Motor neuron (in vitro differentiated cells): ENCODE measurements at regions of chr5 and their contacts with region 1.

Region 1: DNA sequence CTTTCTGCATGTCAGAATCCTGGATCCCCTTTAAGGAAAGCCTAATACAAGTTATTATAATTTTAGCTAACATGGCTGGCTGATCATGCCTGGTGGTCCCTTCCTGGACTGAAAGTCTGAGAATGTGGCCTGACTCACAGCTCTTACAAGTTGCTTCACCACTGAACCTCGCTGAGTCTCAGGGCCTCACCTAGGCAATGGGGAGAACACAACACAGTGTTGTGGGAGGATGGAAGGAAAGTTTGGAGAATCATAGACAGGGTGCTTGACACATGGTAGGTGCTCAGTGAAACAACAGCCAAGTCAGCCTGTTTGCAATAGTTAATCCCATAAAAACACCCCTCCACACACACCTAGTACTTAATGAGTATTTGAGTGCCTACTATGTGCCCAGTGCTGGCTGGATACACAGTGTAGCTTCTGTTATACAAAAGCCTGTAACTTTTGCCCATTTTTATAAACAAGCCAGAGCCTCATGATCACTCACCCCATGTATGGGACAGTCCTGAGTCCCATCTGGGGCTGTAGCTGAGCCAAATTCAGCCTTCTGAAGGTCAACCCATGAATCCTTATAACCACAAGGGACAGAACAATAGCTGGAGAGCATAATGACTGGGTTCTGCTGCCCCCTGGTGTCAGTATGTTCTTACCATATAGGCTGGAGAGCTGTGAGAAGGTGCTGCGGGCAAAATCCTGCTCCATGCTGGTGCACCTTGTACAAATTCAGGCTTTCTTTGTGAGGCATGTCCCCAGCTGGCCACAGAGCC is 3.9 kb downstream of the ACSL6 start:
- ATAC-seq: peak in 4 of 8 experiments; percentile 7 to 84 (median 76)
- H3K4me3 ChIP-seq: no peak overlapping the region
- H3K27ac ChIP-seq: no peak overlapping the region
- H3K4me1 ChIP-seq: peaks cover 11 to 18% of the 10 kb centered on the region in 2 donors

Region 2: DNA sequence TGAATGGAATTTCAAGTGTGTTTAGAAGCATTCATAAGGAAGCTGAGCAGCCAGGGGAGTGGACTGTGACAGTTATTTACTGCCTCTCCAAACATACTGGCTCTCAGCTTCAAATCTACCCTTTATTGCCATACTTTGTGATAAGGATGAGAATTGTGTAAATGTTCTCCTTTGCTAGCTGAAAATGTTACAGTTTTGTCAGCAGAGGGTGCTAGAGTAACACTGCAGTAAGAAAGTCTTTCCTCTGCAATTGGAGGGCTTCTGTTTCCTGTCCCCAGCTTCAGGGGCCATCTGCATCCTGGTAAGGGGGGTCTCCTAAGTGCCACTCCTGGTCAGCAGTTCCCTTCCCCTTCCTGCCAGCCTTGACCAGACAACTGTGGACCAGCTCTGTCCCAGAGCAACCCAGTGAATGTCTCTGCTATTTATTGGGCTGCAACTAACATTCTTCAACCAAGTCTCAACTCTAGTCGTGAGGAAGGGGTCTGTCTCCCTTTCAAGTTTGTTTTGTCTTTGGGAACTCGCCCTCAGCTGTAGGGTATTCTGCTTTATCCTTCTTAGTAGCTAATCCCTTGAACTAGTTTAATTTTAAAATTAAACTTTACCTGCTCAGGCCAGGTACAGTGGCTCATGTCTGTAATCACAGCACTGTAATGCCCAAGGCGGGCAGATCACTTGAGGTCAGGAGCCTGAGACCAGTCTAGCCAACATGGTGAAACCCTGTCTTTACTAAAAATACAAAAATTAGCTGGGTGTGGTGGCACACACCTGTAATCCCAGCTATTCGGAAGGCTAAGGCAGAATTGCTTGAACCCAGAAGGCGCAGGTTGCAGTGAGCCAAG is 417.9 kb before region 1 on chr5:
- in situ Hi-C with region 1: loop called in 2 of 9 experiments (anchors 25 kb)
- ATAC-seq: peak; percentile 39 to 82 (median 68)
- H3K4me3 ChIP-seq: no peak overlapping the region
- H3K27ac ChIP-seq: no peak overlapping the region
- H3K4me1 ChIP-seq: no peaks in the 10 kb centered on the region

Region 3: GRCh38 chr5:131610198-131611063 is 397.2 kb before region 1 on chr5:
- in situ Hi-C with region 1: loop called in 2 of 9 experiments (anchors 25 kb)
- ATAC-seq: peak in 6 of 8 experiments; percentile 13 to 84 (median 44)
- H3K4me3 ChIP-seq: no peak overlapping the region
- H3K27ac ChIP-seq: no peak overlapping the region
- H3K4me1 ChIP-seq: peaks cover 3 to 14% of the 10 kb centered on the region in 2 donors

Region 4: DNA sequence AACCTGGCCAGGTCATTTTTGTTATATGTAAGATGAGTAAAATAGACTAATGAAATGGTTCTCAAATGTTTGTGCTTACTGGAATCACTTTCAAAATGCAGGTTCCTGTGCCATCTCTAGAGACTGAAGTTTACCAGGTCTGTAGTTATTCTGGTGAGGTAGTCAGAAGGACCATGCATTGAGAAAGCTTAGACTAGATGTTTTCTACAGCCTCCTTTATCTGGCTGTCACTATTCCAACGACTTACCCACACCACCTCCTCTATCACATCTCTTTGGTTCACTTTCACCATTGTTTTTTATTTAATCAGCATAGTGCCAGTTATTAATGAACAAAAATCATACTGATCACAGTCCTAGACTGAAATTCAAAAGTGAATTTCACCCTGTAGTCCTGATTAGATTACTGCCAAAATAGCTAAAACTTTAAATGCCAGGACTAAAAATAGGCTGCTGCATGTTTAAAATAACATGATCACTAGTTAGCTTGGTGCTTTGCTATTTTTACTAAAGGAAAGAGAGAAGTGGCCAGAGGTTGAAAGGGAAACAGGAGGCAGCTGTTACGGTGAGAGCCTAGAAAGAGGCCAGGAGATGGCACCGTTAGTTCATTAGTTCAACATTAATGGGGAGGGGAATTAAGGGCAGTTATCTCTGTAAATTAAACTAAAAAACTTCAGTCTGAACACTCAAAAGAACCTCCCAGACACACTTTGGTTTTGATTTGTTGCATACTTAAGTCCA is 196.9 kb before region 1 on chr5:
- in situ Hi-C with region 1: loop called in 4 of 9 experiments (anchors 10 to 25 kb)
- ATAC-seq: peak in 4 of 8 experiments; percentile 31 to 77 (median 46)
- H3K4me3 ChIP-seq: no peak overlapping the region
- H3K27ac ChIP-seq: no peak overlapping the region
- H3K4me1 ChIP-seq: no peaks in the 10 kb centered on the region